MCF 10A (cell line): ENCODE measurements at regions of chr11 and their contacts with region 1.

Region 1: DNA sequence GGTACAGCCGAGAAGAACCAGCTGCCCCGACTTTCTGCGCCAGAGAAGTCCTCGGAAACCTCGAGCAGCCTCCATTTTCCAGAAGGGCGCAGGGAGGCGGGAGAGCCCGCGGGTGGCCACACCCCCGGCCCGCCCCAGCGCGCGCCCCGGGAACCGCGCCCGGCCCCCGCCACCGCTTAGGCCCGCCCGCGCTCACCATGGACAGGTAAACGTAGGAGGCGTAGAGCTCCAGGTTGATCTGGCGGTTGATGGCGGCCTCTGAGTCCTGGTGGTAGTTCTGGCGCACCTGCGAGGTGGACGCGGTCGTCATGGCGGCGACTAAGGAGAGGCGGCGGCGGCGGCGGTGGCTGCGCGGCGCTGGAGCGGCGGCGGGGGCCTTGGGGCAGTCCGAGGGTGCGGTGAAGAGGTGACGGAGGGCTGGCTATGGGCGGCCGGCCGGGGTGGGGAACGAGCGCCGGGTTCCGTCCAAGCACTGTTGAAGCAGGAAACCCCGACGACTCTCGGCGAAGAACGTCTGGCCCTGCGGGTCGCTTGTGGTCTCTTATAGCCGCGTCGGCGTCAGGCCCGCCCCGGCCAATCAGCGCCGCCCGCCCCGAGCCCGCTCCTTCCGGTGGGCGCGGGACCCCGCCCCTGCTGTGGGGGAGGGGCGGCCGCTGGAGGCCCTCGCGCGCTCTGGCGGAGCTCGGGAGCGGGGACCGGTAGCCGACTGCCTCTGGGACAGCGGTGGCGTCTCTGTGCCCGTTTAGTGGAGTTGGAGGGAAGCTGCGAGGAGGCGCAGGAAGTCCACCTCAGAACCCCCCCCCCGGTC is at the start of gene FTH1:
- DNase-seq: peak; percentile 90
- H3K4me3 Mint-ChIP-seq: peak within 1 kb of the TSS; percentile 90
- H3K27ac Mint-ChIP-seq: peak within 1 kb of the TSS; percentile 97
- H3K4me1 Mint-ChIP-seq: peaks cover 58% of the 10 kb centered on the region
- H3K27me3 Mint-ChIP-seq: no peaks in the 10 kb centered on the region
- CTCF ChIP-seq: no peak
- total RNA-seq, gene FTH1: 8,367 and 15,492 TPM in 2 replicates

Region 2: GRCh38 chr11:61816736-61817455 is 150.4 kb before region 1 on chr11 and contains the start of gene FADS1:
- CTCF ChIA-PET with region 1: interaction called, 3 read pairs
- POLR2A ChIA-PET with region 1: interaction called, 11 read pairs
- intact Hi-C with region 1: no loop called
- DNase-seq: peak; percentile 85
- H3K4me3 Mint-ChIP-seq: peak within 1 kb of the TSS; percentile 93
- H3K27ac Mint-ChIP-seq: peak within 1 kb of the TSS; percentile 93
- H3K4me1 Mint-ChIP-seq: peaks cover 34% of the 10 kb centered on the region
- H3K27me3 Mint-ChIP-seq: no peaks in the 10 kb centered on the region
- CTCF ChIP-seq: peak; percentile 50
- total RNA-seq, gene FADS1: 24.2 and 27.5 TPM in 2 replicates

Region 3: GRCh38 chr11:61999141-61999975 is 32.0 kb after region 1 on chr11:
- CTCF ChIA-PET with region 1: interaction called, 4 read pairs
- POLR2A ChIA-PET with region 1: interaction called, 216 read pairs
- intact Hi-C with region 1: no loop called
- DNase-seq: peak; percentile 74
- H3K4me3 Mint-ChIP-seq: no peak overlapping the region
- H3K27ac Mint-ChIP-seq: peak overlapping the region; percentile 96
- H3K4me1 Mint-ChIP-seq: peaks cover 6% of the 10 kb centered on the region
- H3K27me3 Mint-ChIP-seq: no peaks in the 10 kb centered on the region
- CTCF ChIP-seq: no peak

Region 4: GRCh38 chr11:62025487-62026105 is 58.3 kb after region 1 on chr11:
- CTCF ChIA-PET with region 1: interaction called, 16 read pairs
- POLR2A ChIA-PET with region 1: interaction called, 1,703 read pairs
- intact Hi-C with region 1: loop called (anchors 1 kb)
- DNase-seq: peak; percentile 98
- H3K4me3 Mint-ChIP-seq: peak overlapping the region; percentile 58
- H3K27ac Mint-ChIP-seq: peak overlapping the region; percentile 97
- H3K4me1 Mint-ChIP-seq: peaks cover 34% of the 10 kb centered on the region
- H3K27me3 Mint-ChIP-seq: no peaks in the 10 kb centered on the region
- CTCF ChIP-seq: no peak

Region 5: GRCh38 chr11:62054484-62055121 is 87.3 kb after region 1 on chr11:
- CTCF ChIA-PET with region 1: interaction called, 14 read pairs
- POLR2A ChIA-PET with region 1: interaction called, 1,703 read pairs
- intact Hi-C with region 1: loop called (anchors 1 kb)
- DNase-seq: peak; percentile 93
- H3K4me3 Mint-ChIP-seq: peak overlapping the region; percentile 26
- H3K27ac Mint-ChIP-seq: peak overlapping the region; percentile 75
- H3K4me1 Mint-ChIP-seq: peaks cover 18% of the 10 kb centered on the region
- H3K27me3 Mint-ChIP-seq: no peaks in the 10 kb centered on the region
- CTCF ChIP-seq: peak; percentile 81